ENCODE measurements at regions of chr18 and their contacts with region 1.

Region 1: GRCh38 chr18:9913526-9914333 is at the start of gene VAPA:
- DNase-seq: peak; percentile 97
- H3K4me3 ChIP-seq: peak within 1 kb of the TSS; percentile 99
- H3K27ac ChIP-seq: peak within 1 kb of the TSS; percentile 81
- H3K4me1 ChIP-seq: peaks cover 33% of the 10 kb centered on the region
- CTCF ChIP-seq: no peak
- total RNA-seq, gene VAPA: 176 and 184 TPM in 2 replicates

Region 2: GRCh38 chr18:9334329-9334972 is 579.3 kb before region 1 on chr18 and contains the start of gene TWSG1:
- CTCF ChIA-PET with region 1: no interaction called
- POLR2A ChIA-PET with region 1: no interaction called
- intact Hi-C with region 1: loop called (anchors 5 kb)
- DNase-seq: peak; percentile 96
- H3K4me3 ChIP-seq: peak within 1 kb of the TSS; percentile 96
- H3K27ac ChIP-seq: no peak within 1 kb of the TSS
- H3K4me1 ChIP-seq: peaks cover 8% of the 10 kb centered on the region
- CTCF ChIP-seq: peak; percentile 32; the same call in 1 of the 2 replicates
- total RNA-seq, gene TWSG1: 7.4 and 7.5 TPM in 2 replicates

Region 3: DNA sequence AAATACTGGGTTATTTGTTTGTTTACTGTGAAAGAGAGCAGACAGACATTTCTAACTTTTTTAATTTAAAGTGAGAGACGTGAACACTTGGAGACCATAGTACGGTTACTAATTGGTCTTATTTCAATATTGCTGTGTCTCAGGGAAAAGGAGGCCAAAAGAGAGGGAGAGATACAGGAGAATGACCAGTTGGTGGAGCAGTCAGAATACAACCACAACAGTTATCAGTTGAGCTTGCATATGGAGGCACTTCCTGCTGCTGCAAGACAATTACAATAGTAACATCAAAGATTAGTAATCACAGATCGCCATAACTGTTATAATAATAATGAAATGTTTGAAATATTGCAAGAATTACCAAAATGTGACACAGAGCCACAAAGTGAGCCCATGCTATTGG is 521.0 kb before region 1 on chr18:
- CTCF ChIA-PET with region 1: no interaction called
- POLR2A ChIA-PET with region 1: no interaction called
- intact Hi-C with region 1: no loop called
- DNase-seq: peak; percentile 5
- H3K4me3 ChIP-seq: no peak overlapping the region
- H3K27ac ChIP-seq: no peak overlapping the region
- H3K4me1 ChIP-seq: no peaks in the 10 kb centered on the region
- CTCF ChIP-seq: no peak; the same call in 1 of the 2 replicates

Region 4: GRCh38 chr18:9474983-9475642 is 438.6 kb before region 1 on chr18 and contains the start of gene RALBP1:
- CTCF ChIA-PET with region 1: no interaction called
- POLR2A ChIA-PET with region 1: no interaction called
- intact Hi-C with region 1: loop called (anchors 5 kb)
- DNase-seq: peak; percentile 99
- H3K4me3 ChIP-seq: peak within 1 kb of the TSS; percentile 99
- H3K27ac ChIP-seq: peak within 1 kb of the TSS; percentile 85
- H3K4me1 ChIP-seq: peaks cover 30% of the 10 kb centered on the region
- CTCF ChIP-seq: 0 out of 2 replicates have a peak, but pooled peaks have one; percentile 23
- total RNA-seq, gene RALBP1: 78.5 and 80.2 TPM in 2 replicates

Region 5: GRCh38 chr18:9808295-9809241 is 105.2 kb before region 1 on chr18:
- CTCF ChIA-PET with region 1: no interaction called
- POLR2A ChIA-PET with region 1: no interaction called
- intact Hi-C with region 1: no loop called
- DNase-seq: no peak
- H3K4me3 ChIP-seq: no peak overlapping the region
- H3K27ac ChIP-seq: no peak overlapping the region
- H3K4me1 ChIP-seq: no peaks in the 10 kb centered on the region
- CTCF ChIP-seq: no peak

Region 6: DNA sequence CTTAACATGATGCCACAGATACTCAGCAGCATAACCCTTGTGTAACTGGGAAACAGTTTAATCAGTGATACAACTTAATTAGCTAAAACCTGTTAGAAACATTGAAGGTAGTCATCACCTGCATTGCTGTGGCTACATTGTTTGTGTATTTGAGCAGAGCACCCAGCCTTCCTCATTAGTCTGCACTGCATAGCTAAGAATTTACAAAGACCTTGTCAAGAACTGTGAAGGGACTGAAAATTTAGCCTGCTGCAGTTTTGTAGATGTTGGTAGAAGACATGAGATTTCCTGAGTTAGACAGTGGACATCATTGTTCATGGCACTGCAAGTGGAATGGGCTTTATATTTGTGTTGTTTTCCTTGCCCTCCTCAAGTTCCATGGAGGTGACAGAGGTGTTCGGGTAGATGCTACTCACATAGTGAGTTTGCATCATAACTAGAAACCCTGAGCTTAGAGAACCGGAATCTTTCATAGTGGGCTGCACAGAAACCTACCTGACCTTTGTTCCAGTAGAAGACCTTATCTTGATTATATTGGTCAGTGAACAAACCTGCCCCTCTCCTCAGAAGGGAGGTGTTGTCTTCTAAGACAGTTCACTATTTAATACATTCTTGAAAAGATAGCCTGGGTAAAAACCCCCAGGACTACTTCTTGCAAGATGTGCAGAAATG is 12.6 kb after region 1 on chr18:
- CTCF ChIA-PET with region 1: interaction called, 3 read pairs
- POLR2A ChIA-PET with region 1: interaction called, 11 read pairs
- intact Hi-C with region 1: no loop called
- DNase-seq: no peak
- H3K4me3 ChIP-seq: no peak overlapping the region
- H3K27ac ChIP-seq: no peak overlapping the region
- H3K4me1 ChIP-seq: peaks cover 58% of the 10 kb centered on the region
- CTCF ChIP-seq: no peak

Region 7: GRCh38 chr18:10525371-10526210 is 611.9 kb after region 1 on chr18 and contains the start of gene NAPG:
- CTCF ChIA-PET with region 1: interaction called, 3 read pairs
- POLR2A ChIA-PET with region 1: interaction called, 3 read pairs
- intact Hi-C with region 1: loop called (anchors 2 kb)
- DNase-seq: peak; percentile 95
- H3K4me3 ChIP-seq: peak within 1 kb of the TSS; percentile 81
- H3K27ac ChIP-seq: peak within 1 kb of the TSS; percentile 63
- H3K4me1 ChIP-seq: peaks cover 43% of the 10 kb centered on the region
- CTCF ChIP-seq: no peak
- total RNA-seq, gene NAPG: 34.6 and 41.4 TPM in 2 replicates